CD4-positive, alpha-beta memory T cell (primary cell): ENCODE measurements at regions of chr10 and their contacts with region 1.

Region 1: DNA sequence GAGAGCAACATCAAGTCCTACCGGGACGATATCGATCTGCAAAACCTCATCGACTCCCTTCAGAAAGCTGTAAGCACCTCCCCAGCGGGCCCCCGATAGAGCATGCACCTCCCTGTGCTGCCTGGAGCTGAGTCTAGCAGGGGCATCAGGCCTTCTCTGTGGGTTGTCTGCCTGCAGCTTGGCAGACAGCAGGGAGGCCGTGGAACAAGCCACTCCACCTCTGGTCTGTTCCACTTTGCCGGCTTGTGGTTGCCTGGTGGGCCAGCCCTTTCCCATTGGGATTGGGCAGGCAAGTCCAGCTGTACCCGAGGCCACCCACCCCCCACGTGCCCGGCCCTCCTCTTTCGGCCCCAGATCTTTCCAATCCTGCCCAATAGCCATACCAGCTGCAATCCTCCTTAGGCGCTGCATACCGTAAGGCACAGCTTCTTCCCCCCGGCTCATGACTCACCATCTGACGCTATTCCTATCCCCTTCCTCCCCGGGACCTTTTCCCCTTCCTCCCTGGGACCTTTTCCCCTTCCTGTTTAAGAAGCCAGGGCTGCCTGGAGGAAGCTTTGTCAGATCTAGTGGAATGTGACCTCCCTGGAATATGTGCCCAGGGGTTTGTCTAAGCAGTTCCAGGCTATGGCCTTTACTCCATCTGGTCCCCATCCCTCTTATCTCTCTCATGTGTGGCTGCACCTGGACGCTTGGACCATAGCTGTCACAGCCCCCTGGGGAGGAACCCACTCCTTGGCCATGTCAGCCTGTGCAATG is 28.1 kb upstream of the SH2D4B start:
- DNase-seq: no peak
- H3K4me3 ChIP-seq: no peak overlapping the region
- H3K4me3 Mint-ChIP-seq: peak overlapping the region in 1 of 8 donors; percentile 35
- H3K27ac ChIP-seq: no peak overlapping the region
- H3K27ac Mint-ChIP-seq: peak overlapping the region; percentile 6 to 95 (median 75)
- H3K4me1 ChIP-seq: peaks cover 23% of the 10 kb centered on the region
- H3K4me1 Mint-ChIP-seq: peaks cover 26 to 53% (median 39%) of the 10 kb centered on the region in 4 donors
- H3K27me3 ChIP-seq: no peaks in the 10 kb centered on the region
- H3K27me3 Mint-ChIP-seq: no peaks in the 10 kb centered on the region

Region 2: GRCh38 chr10:80530251-80530650 is 20.7 kb after region 1 on chr10:
- CTCF ChIA-PET with region 1: interaction called, 19 read pairs
- POLR2A ChIA-PET with region 1: interaction called, 4 read pairs
- intact Hi-C with region 1: loop called (anchors 2 kb)
- DNase-seq: peak in 3 of 5 donors; percentile 22 to 58 (median 36)
- H3K4me3 ChIP-seq: no peak overlapping the region
- H3K4me3 Mint-ChIP-seq: peak overlapping the region in 7 of 8 donors; percentile 34 to 86 (median 75)
- H3K27ac ChIP-seq: peak overlapping the region; percentile 19
- H3K27ac Mint-ChIP-seq: peak overlapping the region; percentile 65 to 96 (median 87)
- H3K4me1 ChIP-seq: peaks cover 71% of the 10 kb centered on the region
- H3K4me1 Mint-ChIP-seq: peaks cover 44 to 79% (median 67%) of the 10 kb centered on the region in 4 donors
- H3K27me3 ChIP-seq: no peaks in the 10 kb centered on the region
- H3K27me3 Mint-ChIP-seq: no peaks in the 10 kb centered on the region